ENCODE measurements at regions of chr1 and their contacts with region 1.

Region 1: GRCh38 chr1:214123061-214123784 is 135.4 kb downstream of the PROX1 start:
- DNase-seq: peak; percentile 55
- H3K4me3 ChIP-seq: no peak overlapping the region
- H3K27ac ChIP-seq: no peak overlapping the region
- H3K4me1 ChIP-seq: no peaks in the 10 kb centered on the region
- H3K27me3 ChIP-seq: peaks cover 13% of the 10 kb centered on the region
- CTCF ChIP-seq: peak; percentile 66

Region 2: GRCh38 chr1:213122514-213122929 is 1000.7 kb before region 1 on chr1:
- CTCF ChIA-PET with region 1: no interaction called
- POLR2A ChIA-PET with region 1: no interaction called
- intact Hi-C with region 1: loop called (anchors 5 kb)
- DNase-seq: peak; percentile 65
- H3K4me3 ChIP-seq: no peak overlapping the region
- H3K27ac ChIP-seq: no peak overlapping the region
- H3K4me1 ChIP-seq: no peaks in the 10 kb centered on the region
- H3K27me3 ChIP-seq: no peaks in the 10 kb centered on the region
- CTCF ChIP-seq: peak; percentile 68

Region 3: DNA sequence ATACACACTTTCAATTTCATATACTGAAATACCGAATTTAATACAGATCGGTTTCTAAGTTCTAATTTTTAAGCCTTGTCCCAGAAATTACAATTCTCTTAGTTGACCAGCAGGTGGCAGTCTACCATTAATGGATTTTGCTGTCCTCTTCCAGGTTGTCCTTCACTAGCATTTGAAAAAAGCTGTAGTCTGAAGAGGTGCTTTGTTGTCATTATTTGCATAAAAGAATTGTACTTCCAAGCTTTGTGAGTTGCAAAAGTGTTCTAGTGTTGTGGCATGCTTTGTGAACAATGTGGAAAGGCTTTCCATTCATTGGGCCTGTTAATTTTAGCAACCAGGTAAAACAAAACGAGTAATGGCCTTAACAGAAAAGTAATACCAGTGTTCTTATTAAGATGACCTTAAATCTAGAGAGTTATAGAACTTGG is 878.5 kb before region 1 on chr1:
- CTCF ChIA-PET with region 1: no interaction called
- POLR2A ChIA-PET with region 1: no interaction called
- intact Hi-C with region 1: loop called (anchors 1 kb)
- DNase-seq: peak; percentile 62
- H3K4me3 ChIP-seq: no peak overlapping the region
- H3K27ac ChIP-seq: no peak overlapping the region
- H3K4me1 ChIP-seq: no peaks in the 10 kb centered on the region
- H3K27me3 ChIP-seq: no peaks in the 10 kb centered on the region
- CTCF ChIP-seq: peak; percentile 86

Measured in A673 (cell line).